Calu3 (cell line): ENCODE measurements at regions of chr10 and their contacts with region 1.

Region 1: DNA sequence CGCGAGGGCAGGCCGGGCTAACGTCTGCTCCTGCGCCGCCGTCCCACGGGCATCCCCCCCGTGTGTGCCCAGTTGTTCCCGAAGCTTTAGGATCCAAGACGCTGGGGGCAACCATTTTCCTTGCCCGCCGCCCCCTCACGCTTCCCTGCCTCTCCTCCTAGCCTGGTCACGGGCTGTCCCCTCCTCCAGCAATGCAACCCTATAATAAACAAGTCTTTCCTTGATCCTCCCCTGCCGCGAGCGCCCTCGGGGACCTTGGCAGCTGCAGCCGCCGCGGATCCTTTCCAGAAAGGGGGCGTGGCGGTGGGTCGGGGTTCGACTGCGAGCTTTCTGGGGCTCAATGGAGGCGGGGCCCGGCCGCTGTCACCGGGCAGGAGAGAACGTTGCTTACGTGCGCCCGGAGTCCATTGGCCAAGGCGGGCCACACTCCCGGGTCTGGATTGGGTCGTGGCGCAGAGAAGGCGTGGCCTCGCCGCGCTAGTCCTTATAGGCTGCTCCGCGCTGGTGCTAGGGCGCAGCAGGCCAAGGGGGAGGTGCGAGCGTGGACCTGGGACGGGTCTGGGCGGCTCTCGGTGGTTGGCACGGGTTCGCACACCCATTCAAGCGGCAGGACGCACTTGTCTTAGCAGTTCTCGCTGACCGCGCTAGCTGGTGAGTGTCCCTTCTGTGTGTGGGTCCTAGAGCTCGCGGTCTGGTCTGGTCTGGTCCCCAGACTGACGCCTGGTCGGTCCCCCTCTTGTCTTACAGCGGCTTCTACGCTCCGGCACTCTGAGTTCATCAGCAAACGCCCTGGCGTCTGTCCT is at the start of gene DDIT4:
- DNase-seq: peak; percentile 100
- H3K4me3 Mint-ChIP-seq: peak within 1 kb of the TSS; percentile 95
- H3K27ac Mint-ChIP-seq: peak within 1 kb of the TSS; percentile 99
- H3K4me1 Mint-ChIP-seq: peaks cover 62% of the 10 kb centered on the region
- H3K27me3 Mint-ChIP-seq: no peaks in the 10 kb centered on the region
- CTCF ChIP-seq: no peak
- total RNA-seq, gene DDIT4: 294 and 326 TPM in 2 replicates

Region 2: GRCh38 chr10:72243822-72244643 is 29.6 kb before region 1 on chr10:
- CTCF ChIA-PET with region 1: interaction called, 7 read pairs
- intact Hi-C with region 1: loop called (anchors 2 kb)
- DNase-seq: peak; percentile 72
- H3K4me3 Mint-ChIP-seq: peak overlapping the region; percentile 13
- H3K27ac Mint-ChIP-seq: peak overlapping the region; percentile 95
- H3K4me1 Mint-ChIP-seq: peaks cover 74% of the 10 kb centered on the region
- H3K27me3 Mint-ChIP-seq: no peaks in the 10 kb centered on the region
- CTCF ChIP-seq: peak; percentile 59

Region 3: DNA sequence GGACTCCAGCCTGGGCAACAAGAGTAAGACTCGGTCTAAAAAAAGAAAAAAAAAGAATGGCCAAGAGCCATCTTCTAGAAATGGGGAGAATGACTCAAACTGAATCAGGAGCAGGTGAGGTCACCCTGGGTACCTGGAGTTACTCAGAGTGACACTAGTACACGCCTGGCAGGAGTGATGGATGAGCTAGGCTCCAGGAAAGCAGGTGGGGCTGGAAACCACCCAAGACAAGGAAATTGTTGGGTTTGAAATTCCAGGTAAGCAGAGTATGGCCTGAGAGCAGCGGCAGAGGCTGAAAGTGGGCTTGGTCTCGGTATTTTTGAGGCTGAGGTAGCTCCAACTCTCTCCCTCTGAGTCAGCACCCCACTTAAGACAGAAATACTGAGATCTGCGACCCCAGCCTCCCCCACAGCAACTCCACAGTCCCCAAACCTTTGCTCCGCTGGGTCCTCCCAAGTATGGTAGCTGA is 18.6 kb after region 1 on chr10:
- CTCF ChIA-PET with region 1: interaction called, 12 read pairs
- intact Hi-C with region 1: no loop called
- DNase-seq: peak; percentile 90
- H3K4me3 Mint-ChIP-seq: peak overlapping the region; percentile 1
- H3K27ac Mint-ChIP-seq: peak overlapping the region; percentile 74
- H3K4me1 Mint-ChIP-seq: peaks cover 42% of the 10 kb centered on the region
- H3K27me3 Mint-ChIP-seq: no peaks in the 10 kb centered on the region
- CTCF ChIP-seq: no peak

Region 4: GRCh38 chr10:72308320-72308987 is 34.8 kb after region 1 on chr10:
- CTCF ChIA-PET with region 1: interaction called, 14 read pairs
- intact Hi-C with region 1: no loop called
- DNase-seq: peak; percentile 80
- H3K4me3 Mint-ChIP-seq: peak overlapping the region; percentile 34
- H3K27ac Mint-ChIP-seq: peak overlapping the region; percentile 68
- H3K4me1 Mint-ChIP-seq: peaks cover 42% of the 10 kb centered on the region
- H3K27me3 Mint-ChIP-seq: no peaks in the 10 kb centered on the region
- CTCF ChIP-seq: no peak

Region 5: DNA sequence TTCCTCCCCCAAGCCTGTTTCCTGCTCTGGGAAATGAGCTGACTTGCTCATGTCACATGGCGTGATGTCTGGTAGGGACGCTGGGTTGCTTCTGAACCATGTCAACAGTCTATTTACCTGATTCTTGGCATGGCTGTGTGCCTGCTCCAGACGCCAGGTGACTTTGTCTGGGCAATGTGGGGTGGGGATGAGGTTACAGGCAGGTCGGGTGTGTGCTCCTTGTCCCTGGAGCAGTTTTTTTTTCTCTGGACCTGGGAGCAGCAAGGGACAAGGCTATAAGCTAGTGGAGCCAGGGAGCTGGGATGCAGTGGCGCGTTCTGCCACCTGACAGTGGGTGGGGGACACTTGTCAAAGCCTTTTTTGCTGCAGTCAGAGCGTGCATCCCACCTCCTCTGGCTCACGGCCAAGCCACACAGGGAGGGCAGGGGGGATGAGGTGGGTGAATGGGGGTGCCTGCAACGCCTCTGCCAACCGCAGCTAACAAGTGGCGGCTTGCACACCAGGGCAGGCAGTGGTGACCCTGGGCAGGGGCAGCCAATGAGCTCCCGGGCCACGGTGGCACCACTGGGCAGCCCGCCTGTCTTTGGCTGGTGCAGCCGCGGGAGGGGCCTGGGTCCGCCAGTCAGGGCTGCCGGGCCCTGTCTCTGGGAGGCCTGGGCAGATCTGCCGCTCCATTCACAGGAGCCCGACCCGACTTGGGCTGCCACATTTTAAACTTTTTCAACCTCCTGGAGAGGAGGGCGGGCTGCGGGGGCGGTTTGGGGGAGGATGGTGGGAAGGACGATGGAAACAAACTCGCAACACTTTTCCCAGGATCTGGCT is 58.2 kb after region 1 on chr10:
- CTCF ChIA-PET with region 1: interaction called, 31 read pairs
- intact Hi-C with region 1: loop called (anchors 1 kb)
- DNase-seq: peak; percentile 100
- H3K4me3 Mint-ChIP-seq: peak overlapping the region; percentile 51
- H3K27ac Mint-ChIP-seq: peak overlapping the region; percentile 100
- H3K4me1 Mint-ChIP-seq: peaks cover 83% of the 10 kb centered on the region
- H3K27me3 Mint-ChIP-seq: no peaks in the 10 kb centered on the region
- CTCF ChIP-seq: peak; percentile 66